ENCODE measurements at regions of chr1 and their contacts with region 1.

Region 1: DNA sequence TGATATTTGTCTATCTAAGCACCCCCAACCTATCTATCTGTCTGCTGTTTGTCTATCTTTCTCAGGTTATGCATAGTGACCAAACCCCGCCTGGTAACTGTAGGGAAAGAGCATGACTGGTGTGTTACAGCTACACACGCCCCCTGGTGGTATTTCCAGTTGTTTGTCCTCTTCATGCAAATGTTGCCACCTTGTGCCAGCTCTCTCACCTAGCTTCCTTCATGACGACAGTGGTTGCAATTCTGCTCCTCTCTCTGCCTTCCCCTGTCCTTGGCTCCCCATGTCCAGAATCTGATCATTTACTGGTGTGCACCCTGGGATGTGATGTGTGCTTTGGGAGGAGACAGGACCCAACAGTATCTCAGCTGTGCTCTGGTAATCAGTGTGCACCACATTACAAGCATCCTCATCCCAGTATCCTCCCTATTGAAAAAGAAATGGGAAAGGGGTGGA is 8.1 kb upstream of the INKA2 start:
- DNase-seq: no peak
- H3K4me3 ChIP-seq: no peak overlapping the region
- H3K27ac ChIP-seq: no peak overlapping the region
- H3K27me3 ChIP-seq: no peaks in the 10 kb centered on the region
- CTCF ChIP-seq: peak; percentile 74

Region 2: DNA sequence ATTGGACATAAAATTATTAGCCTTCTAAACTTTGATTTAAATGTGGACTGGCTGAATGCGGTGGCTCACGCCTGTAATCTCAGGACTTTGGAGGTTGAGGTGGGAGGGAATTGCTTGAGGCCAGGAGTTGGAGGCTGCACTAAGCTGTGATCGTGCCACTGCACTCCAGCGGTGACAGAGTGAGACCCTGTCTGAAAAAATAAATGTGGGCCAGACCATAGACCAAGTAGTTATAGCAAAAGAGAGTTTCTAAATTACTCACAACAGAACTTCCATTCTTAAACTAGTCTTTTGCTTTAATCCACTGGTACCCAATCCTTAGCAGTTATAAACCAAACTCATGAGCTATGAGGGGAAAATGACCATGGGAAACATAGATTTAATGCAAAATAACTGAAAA is 92.5 kb before region 1 on chr1:
- CTCF ChIA-PET with region 1: no interaction called
- POLR2A ChIA-PET with region 1: no interaction called
- DNase-seq: no peak
- H3K4me3 ChIP-seq: no peak overlapping the region
- H3K27ac ChIP-seq: no peak overlapping the region
- H3K27me3 ChIP-seq: no peaks in the 10 kb centered on the region
- CTCF ChIP-seq: no peak

Region 3: DNA sequence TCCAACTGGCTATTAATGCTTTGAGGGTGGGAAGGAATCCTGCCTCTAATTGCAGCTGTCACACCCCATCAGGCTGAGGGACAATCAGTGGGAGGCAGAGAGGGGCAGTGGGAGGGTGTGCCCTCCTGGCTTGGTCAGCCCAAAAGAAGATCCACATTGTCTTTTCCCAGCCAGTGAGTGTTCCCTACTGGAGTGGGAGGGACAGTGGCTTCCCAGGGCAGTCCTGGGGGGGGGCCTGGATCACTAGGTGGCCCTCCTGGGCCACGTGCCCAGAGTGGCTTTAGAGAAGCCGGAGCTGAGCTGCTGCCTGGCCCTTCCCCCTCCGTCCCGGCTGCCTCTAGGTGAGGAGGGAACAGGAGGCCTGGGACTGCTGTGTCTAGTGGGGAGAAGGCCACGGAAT is 22.1 kb before region 1 on chr1:
- CTCF ChIA-PET with region 1: interaction called, 12 read pairs
- POLR2A ChIA-PET with region 1: no interaction called
- DNase-seq: no peak
- H3K4me3 ChIP-seq: no peak overlapping the region
- H3K27ac ChIP-seq: no peak overlapping the region
- H3K27me3 ChIP-seq: no peaks in the 10 kb centered on the region
- CTCF ChIP-seq: no peak

Region 4: DNA sequence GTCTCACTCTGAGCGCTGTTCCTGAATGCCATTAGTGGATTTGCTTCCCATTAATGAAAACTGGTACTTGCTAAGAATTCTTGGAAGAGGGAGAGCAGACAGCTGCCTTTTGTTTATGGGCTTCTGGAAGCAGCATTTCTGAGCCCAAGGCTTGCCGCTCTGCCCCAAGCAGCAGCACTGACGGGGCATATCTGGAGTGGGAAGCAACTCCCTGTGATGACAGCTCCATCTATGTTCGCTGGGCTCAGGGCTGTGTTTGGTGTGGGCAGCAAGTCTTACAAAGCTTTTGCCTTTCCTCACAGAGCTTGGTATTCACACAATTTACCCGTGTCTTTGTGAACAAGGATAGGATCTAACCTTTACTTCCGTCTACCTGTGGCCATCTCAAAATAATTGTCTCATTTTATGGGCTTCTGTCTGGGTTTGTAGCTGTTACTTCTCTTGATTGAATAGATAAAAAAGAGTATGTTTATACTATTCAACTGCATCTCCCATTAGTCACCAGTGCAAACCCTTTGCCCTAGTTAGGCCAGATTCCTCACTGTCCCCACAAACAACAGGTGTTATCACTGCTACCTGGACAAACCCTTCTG is 80.7 kb after region 1 on chr1:
- CTCF ChIA-PET with region 1: no interaction called
- POLR2A ChIA-PET with region 1: no interaction called
- DNase-seq: no peak
- H3K4me3 ChIP-seq: no peak overlapping the region
- H3K27ac ChIP-seq: no peak overlapping the region
- H3K27me3 ChIP-seq: peaks cover 6% of the 10 kb centered on the region
- CTCF ChIP-seq: no peak

Region 5: DNA sequence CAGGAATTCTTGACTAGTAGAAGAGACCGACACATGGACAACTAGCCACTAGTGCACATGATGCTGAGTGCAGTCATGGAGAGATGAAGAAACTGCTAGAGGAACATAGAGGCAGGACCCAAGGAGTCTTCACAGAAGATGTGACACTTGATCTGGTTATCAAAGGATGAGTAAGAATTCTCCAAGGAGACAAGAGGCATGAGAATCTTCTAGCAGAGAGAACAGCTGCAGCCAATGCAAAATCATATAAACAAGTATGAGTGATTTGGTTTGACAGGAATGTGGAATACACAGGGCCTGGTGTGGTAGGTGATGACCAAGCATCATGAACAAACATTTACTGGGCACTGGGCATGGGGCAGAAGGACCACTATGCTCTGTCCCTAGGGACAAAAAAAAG is 507.8 kb after region 1 on chr1:
- CTCF ChIA-PET with region 1: no interaction called
- POLR2A ChIA-PET with region 1: no interaction called
- DNase-seq: no peak
- H3K4me3 ChIP-seq: no peak overlapping the region
- H3K27ac ChIP-seq: no peak overlapping the region
- H3K27me3 ChIP-seq: peaks cover 3% of the 10 kb centered on the region
- CTCF ChIP-seq: no peak

Measured in AG04450 (cell line).